Sigmoid colon (tissue), 7 donors: ENCODE measurements at regions of chr1 and their contacts with region 1.

Region 1: DNA sequence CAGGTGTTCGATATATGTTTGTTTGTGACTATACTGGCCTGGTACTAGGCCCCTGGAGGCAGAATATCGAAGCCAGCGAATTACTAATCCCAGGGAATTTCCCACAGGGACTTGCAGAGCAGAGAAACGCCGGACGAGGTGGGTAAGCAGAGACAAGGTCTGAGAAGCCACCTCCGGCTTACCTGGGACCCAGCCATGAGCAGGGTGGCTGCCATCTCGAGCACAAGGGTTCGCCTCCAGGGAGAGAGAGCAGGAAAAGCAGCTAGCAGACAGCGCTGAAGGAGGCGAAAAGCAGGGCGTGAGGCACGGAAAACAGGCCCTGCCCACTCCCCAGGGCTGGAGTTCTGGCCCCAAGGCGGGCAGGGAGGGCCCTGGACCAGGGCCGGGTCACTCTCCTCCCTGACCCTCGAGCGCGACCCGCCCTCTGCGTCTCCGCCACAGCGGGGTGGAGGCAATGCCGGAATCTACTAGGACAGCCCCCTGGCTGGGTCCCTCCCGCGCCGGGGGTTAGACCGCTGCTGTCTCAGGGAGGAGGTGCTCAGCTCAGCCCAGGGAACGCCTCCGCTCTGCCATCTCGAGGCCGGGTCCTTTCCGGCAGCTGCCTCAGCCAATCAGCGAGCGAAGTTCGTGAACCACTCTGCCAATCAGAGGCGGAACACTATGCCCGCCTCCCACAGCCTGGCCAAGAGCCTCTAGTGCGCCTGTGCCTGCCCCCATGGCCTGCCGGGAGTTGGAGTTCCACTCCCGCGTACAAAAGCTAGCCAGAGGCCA is 1.7 kb downstream of the ZNF436 start:
- DNase-seq: peak; percentile 99
- H3K4me3 ChIP-seq: peak overlapping the region; percentile 72 to 91 (median 82)
- H3K27ac ChIP-seq: peak overlapping the region; percentile 97 to 99 (median 98)
- H3K4me1 ChIP-seq: peaks cover 0 to 53% (median 43%) of the 10 kb centered on the region in 4 donors
- H3K27me3 ChIP-seq: no peaks in the 10 kb centered on the region
- CTCF ChIP-seq: no peak
- EP300 ChIP-seq: no peak
- POLR2A ChIP-seq: peak; percentile 44 to 68

Region 2: GRCh38 chr1:23403735-23404486 is 35.9 kb after region 1 on chr1:
- intact Hi-C with region 1: loop called (anchors 2 kb)
- DNase-seq: peak; percentile 95
- H3K4me3 ChIP-seq: peak overlapping the region in 2 of 4 donors; percentile 18 to 21
- H3K27ac ChIP-seq: peak overlapping the region; percentile 59 to 74 (median 70)
- H3K4me1 ChIP-seq: peaks cover 0 to 26% (median 20%) of the 10 kb centered on the region in 4 donors
- H3K27me3 ChIP-seq: no peaks in the 10 kb centered on the region
- CTCF ChIP-seq: peak; percentile 80 to 96 (median 95)
- EP300 ChIP-seq: no peak
- POLR2A ChIP-seq: no peak

Region 3: DNA sequence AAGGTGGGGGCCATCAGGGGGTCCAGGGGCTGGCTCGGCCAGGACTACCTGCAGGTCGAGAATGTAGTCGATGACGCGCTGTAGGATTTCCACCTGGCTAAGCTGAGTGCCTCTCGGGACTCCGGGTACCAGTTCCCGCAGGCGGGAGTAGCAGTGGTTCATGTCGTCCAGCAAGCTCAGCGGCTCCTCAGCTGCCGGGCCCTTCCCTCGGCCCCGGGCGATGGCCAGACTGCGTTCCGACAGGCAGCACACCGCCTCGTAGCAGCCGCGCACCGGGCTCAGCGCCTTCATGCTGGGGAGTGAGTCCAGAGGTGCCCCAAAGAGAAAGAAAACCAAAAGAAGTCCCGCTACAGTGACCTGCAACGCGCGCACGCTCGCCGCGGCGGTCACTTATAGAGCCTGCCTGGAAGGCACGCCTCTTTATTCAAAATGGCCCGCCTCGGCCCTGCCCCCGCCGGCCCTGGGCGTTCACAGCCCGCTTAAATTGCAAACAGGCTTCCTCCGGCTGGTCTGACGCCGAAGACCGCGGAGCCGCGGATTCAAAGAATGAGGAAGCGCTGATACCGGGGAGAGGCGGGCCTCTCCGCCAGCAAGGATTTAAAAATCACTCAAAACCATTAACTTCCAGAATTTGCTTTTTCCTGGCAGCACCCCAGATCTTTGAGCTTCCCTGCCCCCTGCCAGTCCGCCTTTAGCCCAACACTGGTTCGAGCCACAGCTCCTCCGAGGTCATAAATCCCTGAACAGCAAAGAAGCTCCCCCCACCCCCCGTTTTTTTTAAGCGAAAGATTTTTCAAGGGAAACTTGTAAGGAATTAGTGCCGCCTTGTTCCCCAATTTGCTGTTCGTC is 191.4 kb after region 1 on chr1 and contains the start of gene ID3:
- intact Hi-C with region 1: loop called (anchors 2 kb)
- DNase-seq: peak; percentile 98
- H3K4me3 ChIP-seq: peak within 1 kb of the TSS; percentile 62 to 74 (median 68)
- H3K27ac ChIP-seq: peak within 1 kb of the TSS; percentile 89 to 96 (median 96)
- H3K4me1 ChIP-seq: peaks cover 0 to 84% (median 77%) of the 10 kb centered on the region in 4 donors
- H3K27me3 ChIP-seq: no peaks in the 10 kb centered on the region
- CTCF ChIP-seq: no peak
- EP300 ChIP-seq: peak in 1 of 4 donors; percentile 7
- POLR2A ChIP-seq: peak; percentile 82 to 99
- total RNA-seq, gene ID3: 72.1 to 144 (median 92.6) TPM